ENCODE measurements at regions of chr15 and their contacts with region 1.

Region 1: GRCh38 chr15:44286814-44287452 is 1.6 kb upstream of the GOLM2 start:
- DNase-seq: no peak
- H3K4me3 ChIP-seq: peak overlapping the region; percentile 68 to 78; a peak in 3 of 4 replicates
- H3K27ac ChIP-seq: peak overlapping the region; percentile 95 to 96
- H3K4me1 ChIP-seq: peaks cover 0 to 7% of the 10 kb centered on the region in 2 experiments; a peak in 3 of 4 replicates
- H3K27me3 ChIP-seq: no peaks in the 10 kb centered on the region
- CTCF ChIP-seq: peak; percentile 34; the same call in 1 of the 2 replicates
- EP300 ChIP-seq: no peak
- RAD21 ChIP-seq: no peak

Region 2: GRCh38 chr15:44163370-44163769 is 123.6 kb before region 1 on chr15:
- CTCF ChIA-PET with region 1: no interaction called
- POLR2A ChIA-PET with region 1: no interaction called
- DNase-seq: no peak
- H3K4me3 ChIP-seq: no peak overlapping the region
- H3K27ac ChIP-seq: peak overlapping the region in 1 of 2 experiments; percentile 74; a peak in 2 of 4 replicates
- H3K4me1 ChIP-seq: peaks cover 0 to 14% of the 10 kb centered on the region in 2 experiments; a peak in 3 of 4 replicates
- H3K27me3 ChIP-seq: no peaks in the 10 kb centered on the region
- CTCF ChIP-seq: no peak
- EP300 ChIP-seq: no peak
- RAD21 ChIP-seq: no peak

Region 3: GRCh38 chr15:44275150-44275830 is 11.6 kb before region 1 on chr15:
- CTCF ChIA-PET with region 1: interaction called, 12 read pairs
- POLR2A ChIA-PET with region 1: no interaction called
- DNase-seq: no peak
- H3K4me3 ChIP-seq: no peak overlapping the region
- H3K27ac ChIP-seq: no peak overlapping the region
- H3K4me1 ChIP-seq: no peaks in the 10 kb centered on the region
- H3K27me3 ChIP-seq: no peaks in the 10 kb centered on the region
- CTCF ChIP-seq: no peak
- EP300 ChIP-seq: no peak
- RAD21 ChIP-seq: no peak

Region 4: GRCh38 chr15:44426975-44427755 is 140.2 kb after region 1 on chr15 and contains the start of gene CTDSPL2:
- CTCF ChIA-PET with region 1: interaction called, 3 read pairs
- POLR2A ChIA-PET with region 1: interaction called, 10 read pairs
- DNase-seq: peak; percentile 89
- H3K4me3 ChIP-seq: peak within 1 kb of the TSS; percentile 76 to 86
- H3K27ac ChIP-seq: peak within 1 kb of the TSS; percentile 99
- H3K4me1 ChIP-seq: peaks cover 0 to 3% of the 10 kb centered on the region in 2 experiments; a peak in 2 of 4 replicates
- H3K27me3 ChIP-seq: no peaks in the 10 kb centered on the region
- CTCF ChIP-seq: peak; percentile 37; the same call in 1 of the 2 replicates
- EP300 ChIP-seq: peak in 1 of 2 experiments; percentile 36; a peak in 1 of 4 replicates
- RAD21 ChIP-seq: no peak; the same call in 1 of the 2 replicates
- polyA plus RNA-seq, gene CTDSPL2: 9.0 and 13.7 TPM in 2 replicates

Measured in SK-N-SH (cell line).